HepG2 (cell line): ENCODE measurements at regions of chr16 and their contacts with region 1.

Region 1: DNA sequence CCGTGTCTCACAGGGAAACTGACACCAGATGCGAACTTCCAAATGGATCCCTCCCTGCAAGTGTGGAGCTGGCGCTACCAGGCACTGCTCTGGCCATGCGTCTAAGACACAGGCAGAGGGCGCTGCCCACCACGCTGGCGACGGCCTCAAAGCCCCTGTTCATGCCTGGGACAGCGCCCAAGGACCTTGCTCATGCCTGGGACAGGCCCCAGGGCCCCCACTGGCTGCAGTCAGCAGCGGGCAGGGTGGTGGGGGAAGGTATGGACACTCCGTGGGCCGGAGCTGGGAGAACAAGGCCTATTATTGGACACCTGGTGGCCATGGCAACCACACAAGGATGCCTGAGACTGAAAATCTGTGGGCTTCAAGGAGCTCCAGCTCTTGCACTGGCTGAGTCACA is 8.8 kb downstream of the ZG16B start:
- DNase-seq: peak; percentile 72
- ATAC-seq: peak; percentile 91
- H3K4me3 ChIP-seq: no peak overlapping the region
- H3K27ac ChIP-seq: no peak overlapping the region
- H3K4me1 ChIP-seq: peaks cover 39% of the 10 kb centered on the region
- H3K27me3 ChIP-seq: peaks cover 3 to 4% of the 10 kb centered on the region in 2 experiments; a peak in 2 of 5 replicates
- CTCF ChIP-seq: peak; percentile 99
- EP300 ChIP-seq: no peak
- POLR2A ChIP-seq: no peak
- RAD21 ChIP-seq: peak; percentile 91

Region 2: GRCh38 chr16:2811703-2812471 is 27.0 kb before region 1 on chr16:
- CTCF ChIA-PET with region 1: no interaction called
- POLR2A ChIA-PET with region 1: no interaction called
- in situ Hi-C with region 1: no loop called
- intact Hi-C with region 1: no loop called
- DNase-seq: no peak
- ATAC-seq: no peak
- H3K4me3 ChIP-seq: no peak overlapping the region
- H3K27ac ChIP-seq: no peak overlapping the region
- H3K4me1 ChIP-seq: peaks cover 19% of the 10 kb centered on the region
- H3K27me3 ChIP-seq: peaks cover 5 to 45% of the 10 kb centered on the region in 2 experiments; a peak in 4 of 5 replicates
- CTCF ChIP-seq: no peak
- EP300 ChIP-seq: no peak
- POLR2A ChIP-seq: no peak
- RAD21 ChIP-seq: no peak

Region 3: DNA sequence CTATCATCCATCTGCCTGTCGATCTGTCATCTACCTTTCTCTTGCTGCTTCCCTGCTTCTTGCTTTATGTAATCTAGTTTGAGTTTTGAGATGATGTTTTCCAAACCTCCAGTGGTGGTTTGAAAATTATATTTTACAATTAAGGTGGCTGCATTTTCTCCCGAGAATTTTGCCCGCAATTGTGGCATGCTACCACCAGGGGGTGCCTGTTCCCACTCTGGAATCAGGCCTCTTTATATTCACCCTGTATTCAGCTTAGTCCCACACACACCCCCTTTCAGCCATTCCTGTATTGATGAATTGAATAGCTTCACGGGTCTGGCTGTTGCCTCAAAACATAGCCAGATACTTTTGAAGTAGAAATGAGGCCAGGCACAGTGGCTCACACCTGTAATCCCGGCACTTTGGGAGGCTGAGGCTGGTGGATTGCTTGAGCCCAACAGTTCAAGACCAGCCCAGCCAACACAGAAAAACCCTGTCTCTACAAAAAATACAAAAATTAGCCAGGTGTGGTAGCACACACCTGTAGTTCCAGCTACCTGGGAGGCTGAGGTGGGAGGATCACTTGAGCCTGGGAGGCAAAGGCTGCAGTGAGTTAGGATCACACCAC is 15.9 kb after region 1 on chr16:
- CTCF ChIA-PET with region 1: no interaction called
- POLR2A ChIA-PET with region 1: no interaction called
- in situ Hi-C with region 1: no loop called
- intact Hi-C with region 1: loop called (anchors 2 kb)
- DNase-seq: no peak
- ATAC-seq: no peak
- H3K4me3 ChIP-seq: no peak overlapping the region
- H3K27ac ChIP-seq: no peak overlapping the region
- H3K4me1 ChIP-seq: peaks cover 16% of the 10 kb centered on the region
- H3K27me3 ChIP-seq: peaks cover 2 to 7% of the 10 kb centered on the region in 2 experiments; a peak in 3 of 5 replicates
- CTCF ChIP-seq: peak; percentile 64
- EP300 ChIP-seq: no peak
- POLR2A ChIP-seq: no peak
- RAD21 ChIP-seq: no peak

Region 4: DNA sequence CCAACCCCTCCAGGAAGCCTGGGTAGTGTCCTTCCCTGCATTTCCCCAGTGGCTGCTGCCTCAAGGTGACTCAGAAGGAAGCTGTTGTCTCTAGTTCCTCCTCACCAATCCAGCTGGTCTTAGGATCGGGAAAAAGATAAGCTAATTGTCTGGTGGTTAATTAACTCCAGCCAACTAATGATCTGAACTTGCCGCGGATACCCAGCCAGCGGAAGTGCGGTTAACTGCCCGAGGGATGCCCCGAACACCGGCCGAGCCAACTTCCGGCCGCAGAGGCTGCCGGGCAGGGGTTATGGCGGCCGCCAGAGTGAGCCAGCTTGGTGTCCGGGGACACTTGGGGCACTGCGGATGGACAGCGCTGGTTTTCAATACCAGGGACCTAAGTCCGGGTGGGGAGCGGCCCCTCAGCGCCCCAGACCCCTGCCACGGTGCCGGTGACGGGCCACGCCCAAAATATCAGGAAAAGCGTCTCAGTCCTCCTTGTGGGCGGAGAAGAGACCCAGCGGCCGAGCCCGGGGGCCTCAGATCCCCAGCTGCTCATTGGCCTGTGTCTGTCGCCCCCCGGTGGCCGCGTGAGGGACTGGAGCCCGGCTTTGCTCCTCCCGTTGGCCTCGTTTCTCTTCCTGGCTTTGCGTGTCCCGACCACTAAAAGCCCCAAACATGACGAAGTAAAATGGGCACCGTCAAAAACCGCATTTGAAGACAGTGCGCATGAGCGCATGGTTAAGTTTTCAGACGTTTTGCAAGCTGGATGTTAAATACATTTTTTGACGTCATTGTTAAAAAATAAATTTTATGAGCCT is 29.3 kb after region 1 on chr16:
- CTCF ChIA-PET with region 1: interaction called, 19 read pairs
- POLR2A ChIA-PET with region 1: interaction called, 19 read pairs
- in situ Hi-C with region 1: loop called (anchors 5 kb)
- intact Hi-C with region 1: loop called (anchors 1 kb)
- DNase-seq: peak; percentile 82
- ATAC-seq: peak; percentile 93
- H3K4me3 ChIP-seq: peak overlapping the region; percentile 65 to 83 (median 80)
- H3K27ac ChIP-seq: peak overlapping the region; percentile 73
- H3K4me1 ChIP-seq: peaks cover 29% of the 10 kb centered on the region
- H3K27me3 ChIP-seq: peaks cover 0 to 7% of the 10 kb centered on the region in 2 experiments; a peak in 1 of 5 replicates
- CTCF ChIP-seq: peak; percentile 97
- EP300 ChIP-seq: no peak
- POLR2A ChIP-seq: peak; percentile 81 to 83
- RAD21 ChIP-seq: peak; percentile 96

Region 5: GRCh38 chr16:2874912-2875362 is 36.0 kb after region 1 on chr16:
- CTCF ChIA-PET with region 1: interaction called, 3 read pairs
- POLR2A ChIA-PET with region 1: no interaction called
- in situ Hi-C with region 1: loop called (anchors 5 kb)
- intact Hi-C with region 1: no loop called
- DNase-seq: peak; percentile 49
- ATAC-seq: peak; percentile 97
- H3K4me3 ChIP-seq: peak overlapping the region in 1 of 3 experiments; percentile 58; a peak in 2 of 6 replicates
- H3K27ac ChIP-seq: no peak overlapping the region
- H3K4me1 ChIP-seq: peaks cover 19% of the 10 kb centered on the region
- H3K27me3 ChIP-seq: no peaks in the 10 kb centered on the region; a peak in 1 of 5 replicates
- CTCF ChIP-seq: peak; percentile 94
- EP300 ChIP-seq: no peak
- POLR2A ChIP-seq: no peak
- RAD21 ChIP-seq: peak; percentile 89

Region 6: DNA sequence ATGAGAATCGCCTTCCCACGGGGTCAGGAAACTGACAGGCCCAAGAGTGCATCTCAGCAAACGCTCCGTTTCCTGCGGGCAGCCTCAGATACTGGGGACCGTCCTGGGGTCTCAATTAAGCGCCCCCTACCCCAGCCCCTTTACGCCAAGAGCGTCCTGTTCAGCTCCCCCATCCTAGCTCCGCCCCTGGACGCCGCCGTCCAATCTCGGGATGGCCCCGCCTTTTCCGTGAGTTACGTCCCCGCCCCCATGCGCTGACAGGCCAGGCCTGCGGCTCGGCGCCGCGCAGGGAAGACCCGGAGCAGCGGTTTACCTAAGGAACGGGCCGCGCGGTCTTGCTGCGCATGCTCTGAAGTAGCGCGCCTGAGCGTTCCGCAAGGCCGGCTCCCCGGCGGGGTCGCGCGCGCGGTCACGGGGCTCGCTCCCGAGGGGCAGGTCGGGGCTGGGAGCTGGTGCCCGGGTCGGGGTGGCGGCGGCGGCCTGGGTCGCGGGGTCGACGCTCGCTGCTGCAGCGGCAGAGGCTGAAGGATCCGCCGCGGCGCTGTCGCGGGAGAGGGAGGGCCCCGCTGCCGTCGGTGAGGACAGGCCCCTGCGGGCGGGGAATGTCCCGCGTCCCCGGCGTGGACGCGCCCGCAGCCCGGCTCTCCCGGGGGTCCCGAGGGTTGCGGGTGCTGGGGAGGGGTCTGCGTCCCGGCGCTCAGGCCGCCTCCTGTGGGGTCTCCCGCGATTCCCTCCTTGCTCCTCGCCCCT is 72.8 kb after region 1 on chr16 and contains the start of gene FLYWCH1:
- CTCF ChIA-PET with region 1: no interaction called
- POLR2A ChIA-PET with region 1: no interaction called
- in situ Hi-C with region 1: loop called (anchors 5 kb)
- intact Hi-C with region 1: no loop called
- DNase-seq: peak; percentile 92
- ATAC-seq: peak; percentile 93
- H3K4me3 ChIP-seq: peak within 1 kb of the TSS; percentile 65 to 76 (median 76)
- H3K27ac ChIP-seq: peak within 1 kb of the TSS; percentile 44
- H3K4me1 ChIP-seq: peaks cover 18% of the 10 kb centered on the region
- H3K27me3 ChIP-seq: no peaks in the 10 kb centered on the region; a peak in 1 of 5 replicates
- CTCF ChIP-seq: 0 out of 2 replicates have a peak, but pooled peaks have one; percentile 24
- EP300 ChIP-seq: peak in 1 of 2 experiments; percentile 15; a peak in 1 of 4 replicates
- POLR2A ChIP-seq: peak; percentile 24 to 71; a peak in 2 of 4 replicates
- RAD21 ChIP-seq: peak; percentile 58; the same call in 1 of the 2 replicates
- total RNA-seq, gene FLYWCH1: 9.9 and 12.4 TPM in 2 replicates

Region 7: GRCh38 chr16:2919511-2920255 is 80.8 kb after region 1 on chr16:
- CTCF ChIA-PET with region 1: interaction called, 9 read pairs
- POLR2A ChIA-PET with region 1: no interaction called
- in situ Hi-C with region 1: loop called (anchors 5 kb)
- intact Hi-C with region 1: loop called (anchors 1 kb)
- DNase-seq: peak; percentile 55
- ATAC-seq: no peak
- H3K4me3 ChIP-seq: no peak overlapping the region
- H3K27ac ChIP-seq: no peak overlapping the region
- H3K4me1 ChIP-seq: no peaks in the 10 kb centered on the region
- H3K27me3 ChIP-seq: no peaks in the 10 kb centered on the region
- CTCF ChIP-seq: peak; percentile 79
- EP300 ChIP-seq: no peak
- POLR2A ChIP-seq: no peak
- RAD21 ChIP-seq: peak; percentile 78